GM13976 (cell line): ENCODE measurements at regions of chr4 and their contacts with region 1.

Region 1: DNA sequence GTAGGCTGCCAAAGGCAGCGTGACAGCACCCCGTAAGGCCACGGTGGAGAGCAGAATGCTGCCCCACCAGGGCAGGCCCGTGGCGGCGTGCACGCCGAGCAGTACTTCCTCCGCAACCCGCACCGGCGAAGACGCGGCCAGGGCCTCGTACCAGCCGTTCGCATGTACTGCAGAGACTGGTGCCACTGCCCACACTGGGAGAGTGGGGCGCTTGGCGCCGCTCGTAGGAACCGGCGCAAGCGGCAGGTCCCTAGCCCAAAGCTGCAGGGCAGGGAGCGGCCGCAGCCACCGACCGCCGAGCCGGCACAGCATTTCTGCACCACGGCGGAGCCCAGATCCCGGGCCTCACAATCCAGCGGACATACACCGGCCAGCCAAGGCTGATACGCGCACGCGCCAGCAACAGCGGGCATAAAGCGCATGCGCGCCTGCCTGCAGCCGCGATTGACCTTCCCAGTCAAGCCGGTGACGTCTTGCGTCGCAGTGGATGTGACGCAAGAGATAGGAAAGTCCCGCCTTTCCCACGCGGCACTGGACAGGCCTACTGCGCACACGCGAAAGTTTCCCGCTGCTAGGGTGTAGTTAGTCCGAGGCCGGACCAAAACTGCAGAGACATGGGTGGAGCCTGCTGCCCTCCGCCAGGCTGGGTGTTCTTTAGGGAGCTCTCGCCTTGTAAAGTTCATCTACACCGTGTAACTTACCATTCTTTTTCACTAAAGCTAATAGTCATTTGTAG is at the start of gene COX18:
- DNase-seq: peak; percentile 91
- CTCF ChIP-seq: no peak

Region 2: GRCh38 chr4:72971572-72971971 is 97.9 kb before region 1 on chr4:
- in situ Hi-C with region 1: no loop called
- DNase-seq: no peak
- CTCF ChIP-seq: no peak

Region 3: GRCh38 chr4:73258686-73259570 is 189.4 kb after region 1 on chr4 and contains the start of gene ANKRD17:
- in situ Hi-C with region 1: loop called (anchors 10 kb)
- DNase-seq: peak; percentile 89
- CTCF ChIP-seq: no peak